ENCODE measurements at regions of chr1 and their contacts with region 1.

Region 1: DNA sequence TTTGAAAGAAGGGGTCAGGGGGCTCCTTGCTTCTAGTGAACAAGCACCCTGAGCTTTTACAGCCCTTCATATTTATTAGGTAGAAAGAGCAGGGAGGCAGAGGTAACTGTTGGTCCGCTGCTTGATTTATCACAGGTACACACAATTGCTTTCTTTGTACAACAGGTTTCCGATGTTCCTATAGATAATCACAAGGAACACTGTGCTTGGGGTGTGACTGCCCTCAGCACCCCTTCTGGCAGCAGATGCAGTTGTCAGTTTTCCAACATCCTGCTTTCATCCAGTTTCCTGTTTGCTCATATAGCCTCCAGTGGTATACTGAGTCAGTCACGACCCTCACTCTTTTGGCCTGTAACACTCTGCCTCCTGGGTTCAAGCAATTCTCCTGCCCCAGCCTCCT is 40.6 kb downstream of the SCP2 start:
- DNase-seq: no peak
- ATAC-seq: no peak
- H3K4me3 ChIP-seq: no peak overlapping the region
- H3K27ac ChIP-seq: no peak overlapping the region
- H3K4me1 ChIP-seq: no peaks in the 10 kb centered on the region
- H3K27me3 ChIP-seq: no peaks in the 10 kb centered on the region
- CTCF ChIP-seq: no peak

Region 2: DNA sequence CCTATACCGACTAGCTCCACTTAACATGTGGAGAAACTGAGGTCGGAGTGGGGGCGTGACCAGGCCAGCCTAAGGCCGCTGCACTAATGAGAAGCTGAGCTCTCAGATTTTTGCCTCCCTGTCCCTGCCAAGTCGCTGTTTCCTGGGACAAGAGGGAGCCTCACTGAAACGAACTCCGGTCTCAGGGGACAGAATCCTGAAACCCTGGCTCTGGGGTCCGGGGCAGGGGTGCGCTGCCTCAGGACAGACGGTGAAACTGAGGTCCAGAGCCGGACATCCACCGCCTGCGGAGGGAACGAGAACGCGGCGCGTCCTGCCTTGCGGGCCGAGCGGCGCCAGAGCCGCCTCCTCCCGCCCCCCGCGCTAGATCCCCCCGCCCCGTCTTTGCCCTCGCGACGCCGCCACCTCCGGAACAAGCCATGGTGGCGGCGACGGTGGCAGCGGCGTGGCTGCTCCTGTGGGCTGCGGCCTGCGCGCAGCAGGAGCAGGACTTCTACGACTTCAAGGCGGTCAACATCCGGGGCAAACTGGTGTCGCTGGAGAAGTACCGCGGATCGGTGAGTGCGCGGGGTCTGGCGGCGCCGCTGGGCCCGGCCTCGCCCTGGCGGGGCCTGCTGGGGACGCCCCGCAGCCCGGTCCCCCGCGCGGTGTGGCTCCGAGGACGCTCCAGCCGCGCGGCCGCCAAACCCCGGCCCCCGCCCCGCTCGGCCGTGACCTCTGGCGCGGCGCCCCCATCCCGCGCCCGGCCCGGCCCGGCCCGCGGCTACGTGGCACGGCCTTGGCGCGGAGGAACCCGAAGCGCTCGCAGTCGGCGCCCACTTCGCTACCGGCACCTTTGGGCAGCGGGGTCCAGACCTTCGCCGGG is 365.4 kb before region 1 on chr1 and contains the start of gene GPX7:
- intact Hi-C with region 1: loop called in 1 of 10 experiments (anchors 5 kb)
- DNase-seq: peak; percentile 39 to 49
- ATAC-seq: peak; percentile 57 to 83 (median 71)
- H3K4me3 ChIP-seq: peak within 1 kb of the TSS; percentile 44 to 69 (median 60)
- H3K27ac ChIP-seq: peak within 1 kb of the TSS; percentile 70 to 92 (median 84)
- H3K4me1 ChIP-seq: peaks cover 3 to 42% (median 27%) of the 10 kb centered on the region in 9 donors
- H3K27me3 ChIP-seq: no peaks in the 10 kb centered on the region
- CTCF ChIP-seq: no peak
- total RNA-seq, gene GPX7: 3.3 to 14.6 (median 6.5) TPM

Region 3: DNA sequence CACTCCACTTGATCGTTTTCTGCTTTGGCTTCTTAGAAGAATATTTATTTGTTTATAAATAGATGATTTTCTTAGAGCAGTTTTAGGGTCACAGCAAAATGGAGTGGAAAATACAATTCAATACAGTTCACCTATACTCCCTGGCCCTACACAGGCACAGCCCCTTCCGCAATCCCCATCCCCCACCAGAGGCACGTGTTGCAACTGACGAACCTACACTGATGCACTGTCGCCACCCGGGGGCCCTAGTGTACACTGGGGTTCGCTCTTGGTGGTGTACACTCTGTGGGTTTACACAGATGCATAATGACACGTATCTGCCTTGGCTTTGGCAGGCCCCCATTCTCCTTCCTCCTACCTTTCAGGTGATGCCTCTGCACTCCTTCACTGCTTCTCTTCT is 54.1 kb before region 1 on chr1:
- intact Hi-C with region 1: loop called in 1 of 10 experiments (anchors 10 kb)
- DNase-seq: no peak
- ATAC-seq: no peak
- H3K4me3 ChIP-seq: no peak overlapping the region
- H3K27ac ChIP-seq: no peak overlapping the region
- H3K4me1 ChIP-seq: peaks cover 0 to 35% (median 12%) of the 10 kb centered on the region in 9 donors
- H3K27me3 ChIP-seq: no peaks in the 10 kb centered on the region
- CTCF ChIP-seq: no peak

Region 4: DNA sequence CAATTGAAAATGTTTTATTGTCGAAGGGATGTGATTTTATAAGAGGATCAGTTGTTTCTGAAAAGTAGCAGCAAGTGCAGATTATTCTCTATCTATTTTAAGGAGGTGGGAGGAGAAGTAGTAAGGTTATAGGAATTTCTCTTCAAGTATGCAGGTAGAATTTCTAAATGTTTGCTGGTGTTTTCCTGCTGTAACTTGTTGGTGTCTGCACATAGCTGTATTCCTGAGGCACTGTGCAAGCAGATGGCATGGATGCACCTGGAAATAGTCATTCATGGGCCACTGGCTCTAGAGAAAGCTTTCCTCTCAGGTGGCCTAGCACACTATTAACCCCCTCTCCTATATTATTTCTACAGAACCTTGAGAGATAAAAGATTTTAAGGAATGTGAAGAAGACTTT is 64.1 kb after region 1 on chr1:
- intact Hi-C with region 1: no loop called
- DNase-seq: no peak
- ATAC-seq: no peak
- H3K4me3 ChIP-seq: no peak overlapping the region
- H3K27ac ChIP-seq: no peak overlapping the region
- H3K4me1 ChIP-seq: no peaks in the 10 kb centered on the region
- H3K27me3 ChIP-seq: no peaks in the 10 kb centered on the region
- CTCF ChIP-seq: no peak

Measured in heart right ventricle (tissue), 16 donors.